ENCODE measurements at regions of chr11 and their contacts with region 1.

Region 1: DNA sequence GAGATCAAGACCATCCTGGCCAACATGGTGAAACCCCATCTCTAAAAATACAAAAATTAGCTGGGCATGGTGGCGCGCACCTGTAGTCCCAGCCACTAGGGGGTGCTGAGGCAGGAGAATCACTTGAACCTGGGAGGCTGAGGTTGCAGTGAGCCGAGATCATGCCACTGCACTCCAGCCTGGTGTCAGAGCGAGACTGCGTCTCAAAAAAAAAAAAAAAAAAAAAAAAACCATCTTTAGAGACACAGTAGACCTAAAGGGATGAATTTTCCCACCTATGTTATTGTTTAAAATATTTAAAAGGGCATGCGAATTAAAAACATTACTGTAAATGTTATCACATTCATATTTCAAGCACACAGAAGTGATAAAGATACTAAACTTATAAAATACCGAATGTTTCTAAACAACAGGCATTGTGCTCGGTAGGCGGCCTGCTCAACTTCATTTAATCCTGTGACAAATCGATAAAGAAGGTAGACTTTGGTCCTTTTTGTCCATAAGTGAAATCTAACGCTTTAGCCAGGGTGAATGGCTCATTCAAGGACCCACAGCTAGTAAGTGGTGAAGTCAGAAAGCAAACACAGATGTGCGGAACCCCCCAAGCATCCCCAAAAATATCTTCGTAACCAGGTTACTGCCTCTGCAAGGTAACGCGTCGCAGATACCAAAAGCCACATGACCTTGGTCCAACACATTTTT is 16.1 kb downstream of the NCAPD3 start:
- DNase-seq: peak; percentile 78
- ATAC-seq: peak; percentile 44
- H3K4me3 Mint-ChIP-seq: no peak overlapping the region
- H3K27ac Mint-ChIP-seq: no peak overlapping the region
- H3K4me1 Mint-ChIP-seq: peaks cover 14% of the 10 kb centered on the region
- H3K27me3 Mint-ChIP-seq: no peaks in the 10 kb centered on the region

Region 2: GRCh38 chr11:134244655-134245054 is 37.0 kb after region 1 on chr11:
- CTCF ChIA-PET with region 1: interaction called, 14 read pairs
- POLR2A ChIA-PET with region 1: no interaction called
- DNase-seq: no peak
- ATAC-seq: peak; percentile 77
- H3K4me3 Mint-ChIP-seq: no peak overlapping the region
- H3K27ac Mint-ChIP-seq: no peak overlapping the region
- H3K4me1 Mint-ChIP-seq: peaks cover 8% of the 10 kb centered on the region
- H3K27me3 Mint-ChIP-seq: no peaks in the 10 kb centered on the region

Region 3: GRCh38 chr11:134253188-134253993 is 45.7 kb after region 1 on chr11 and contains the starts of genes ACAD8 and THYN1:
- CTCF ChIA-PET with region 1: interaction called, 11 read pairs
- POLR2A ChIA-PET with region 1: no interaction called
- DNase-seq: peak; percentile 98
- ATAC-seq: peak; percentile 100
- H3K4me3 Mint-ChIP-seq: peak within 1 kb of the TSS; percentile 86
- H3K27ac Mint-ChIP-seq: peak within 1 kb of the TSS; percentile 89
- H3K4me1 Mint-ChIP-seq: peaks cover 32% of the 10 kb centered on the region
- H3K27me3 Mint-ChIP-seq: no peaks in the 10 kb centered on the region
- total RNA-seq, gene ACAD8: 20.7 to 21.1 TPM
- total RNA-seq, gene THYN1: 53.7 to 56.1 TPM

Region 4: GRCh38 chr11:134331354-134332188 is 123.9 kb after region 1 on chr11 and contains the start of gene GLB1L2:
- CTCF ChIA-PET with region 1: no interaction called
- POLR2A ChIA-PET with region 1: no interaction called
- DNase-seq: peak; percentile 77
- ATAC-seq: peak; percentile 97
- H3K4me3 Mint-ChIP-seq: peak within 1 kb of the TSS; percentile 75
- H3K27ac Mint-ChIP-seq: no peak within 1 kb of the TSS
- H3K4me1 Mint-ChIP-seq: peaks cover 13% of the 10 kb centered on the region
- H3K27me3 Mint-ChIP-seq: peaks cover 56% of the 10 kb centered on the region
- total RNA-seq, gene GLB1L2: 1.2 to 1.9 TPM

Measured in activated CD8-positive, alpha-beta T cell treated with anti-CD3 and anti-CD28 coated beads, Interleukin-2, amount 10 ng/mL, durations not matched to agents 7 days and 5 days (primary cell).